Breast epithelium (tissue), 4 donors: ENCODE measurements at regions of chr20 and their contacts with region 1.

Region 1: DNA sequence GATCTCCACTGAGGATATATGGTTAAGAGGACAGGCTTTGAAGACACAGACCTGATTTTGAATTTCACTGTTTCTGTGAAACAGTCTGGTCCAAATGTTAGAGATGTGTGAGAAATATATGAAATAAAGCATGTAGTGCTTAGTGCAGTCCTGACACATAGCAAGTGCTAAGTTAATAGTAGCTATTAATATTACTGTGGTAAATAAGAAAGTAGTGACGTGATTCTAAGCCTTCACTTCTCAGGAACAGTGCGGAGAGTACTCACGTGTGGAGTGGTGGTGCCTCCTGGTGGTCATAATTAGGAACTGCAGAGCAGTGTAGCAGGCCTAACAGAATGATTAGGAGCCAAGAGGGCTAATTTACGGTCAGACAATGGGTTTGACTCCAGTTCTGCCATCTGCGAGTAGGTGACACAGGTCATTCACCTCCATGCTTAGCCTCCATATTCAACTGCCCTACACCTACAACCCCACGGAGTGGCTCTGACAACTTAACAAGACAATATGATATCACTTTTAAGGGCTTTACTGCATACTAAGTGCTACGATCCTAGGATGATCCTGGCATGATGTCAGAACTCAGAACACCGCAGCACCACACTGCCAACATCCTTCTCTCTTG is 106.2 kb downstream of the JPH2 start:
- DNase-seq: peak; percentile 57 to 72
- H3K4me3 ChIP-seq: no peak overlapping the region
- H3K27ac ChIP-seq: no peak overlapping the region
- H3K4me1 ChIP-seq: no peaks in the 10 kb centered on the region
- H3K27me3 ChIP-seq: no peaks in the 10 kb centered on the region
- CTCF ChIP-seq: peak; percentile 93 to 96 (median 95)
- POLR2A ChIP-seq: no peak

Region 2: DNA sequence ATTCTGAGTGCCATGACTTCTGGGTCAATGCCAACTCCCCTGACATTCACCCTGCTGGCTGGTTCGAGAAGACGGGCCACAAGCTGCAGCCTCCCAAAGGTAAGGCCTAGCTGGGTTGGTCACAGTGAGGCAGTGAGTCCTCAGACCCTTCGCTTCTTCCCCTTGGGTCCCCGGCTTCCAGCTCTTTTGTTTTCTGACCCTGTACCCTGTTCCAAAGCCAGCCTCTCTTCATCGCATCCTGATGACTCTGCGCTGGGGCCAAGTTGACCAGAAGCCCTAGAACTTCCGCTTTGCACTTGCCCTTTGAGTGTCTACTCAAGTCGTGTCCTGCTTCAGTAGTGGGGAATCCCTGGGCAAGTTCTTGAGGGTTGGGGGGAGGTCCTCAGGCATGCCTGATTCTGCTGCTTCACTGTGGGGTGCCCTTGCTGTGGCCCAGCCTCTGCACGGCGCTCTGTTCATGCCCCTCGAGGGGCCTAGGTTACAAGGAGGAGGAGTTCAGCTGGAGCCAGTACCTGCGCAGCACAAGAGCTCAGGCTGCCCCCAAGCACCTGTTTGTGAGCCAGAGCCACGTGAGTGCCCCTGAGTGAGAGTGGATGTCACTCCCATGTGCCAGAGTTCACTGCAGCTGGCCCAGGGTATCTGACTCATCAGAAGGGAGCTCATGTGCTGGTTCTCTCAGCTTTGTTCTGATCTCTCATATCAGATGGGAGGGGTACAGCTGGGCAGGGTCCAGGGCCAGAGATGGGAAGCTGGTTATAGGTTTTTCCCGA is 550.3 kb before region 1 on chr20:
- intact Hi-C with region 1: loop called (anchors 5 kb)
- DNase-seq: no peak
- H3K4me3 ChIP-seq: no peak overlapping the region
- H3K27ac ChIP-seq: no peak overlapping the region
- H3K4me1 ChIP-seq: no peaks in the 10 kb centered on the region
- H3K27me3 ChIP-seq: no peaks in the 10 kb centered on the region
- CTCF ChIP-seq: no peak
- POLR2A ChIP-seq: no peak

Region 3: GRCh38 chr20:43911066-43911465 is 169.7 kb before region 1 on chr20:
- intact Hi-C with region 1: no loop called
- DNase-seq: no peak
- H3K4me3 ChIP-seq: no peak overlapping the region
- H3K27ac ChIP-seq: no peak overlapping the region
- H3K4me1 ChIP-seq: no peaks in the 10 kb centered on the region
- H3K27me3 ChIP-seq: peaks cover 0 to 31% of the 10 kb centered on the region in 2 donors
- CTCF ChIP-seq: no peak
- POLR2A ChIP-seq: no peak